Activated T-helper 1 cell treated with anti-CD3 and anti-CD28 coated beads, Interleukin-12 subunit alpha, Interleukin-12 subunit beta, Interleukin-2, Interleukin-4 antibody, amounts not matched to agents 30 ng/mL and 10 ng/mL and 1 ng/mL, durations not matched to agents 14 hours and 24 hours and 36 hours (primary cell): ENCODE measurements at regions of chr5 and their contacts with region 1.

Region 1: GRCh38 chr5:148963664-148964063 is 99.2 kb downstream of the SH3TC2 start:
- DNase-seq: no peak
- H3K4me3 Mint-ChIP-seq: no peak overlapping the region
- H3K27ac Mint-ChIP-seq: no peak overlapping the region
- H3K4me1 Mint-ChIP-seq: peaks cover 7% of the 10 kb centered on the region
- H3K27me3 Mint-ChIP-seq: peaks cover 2% of the 10 kb centered on the region

Region 2: DNA sequence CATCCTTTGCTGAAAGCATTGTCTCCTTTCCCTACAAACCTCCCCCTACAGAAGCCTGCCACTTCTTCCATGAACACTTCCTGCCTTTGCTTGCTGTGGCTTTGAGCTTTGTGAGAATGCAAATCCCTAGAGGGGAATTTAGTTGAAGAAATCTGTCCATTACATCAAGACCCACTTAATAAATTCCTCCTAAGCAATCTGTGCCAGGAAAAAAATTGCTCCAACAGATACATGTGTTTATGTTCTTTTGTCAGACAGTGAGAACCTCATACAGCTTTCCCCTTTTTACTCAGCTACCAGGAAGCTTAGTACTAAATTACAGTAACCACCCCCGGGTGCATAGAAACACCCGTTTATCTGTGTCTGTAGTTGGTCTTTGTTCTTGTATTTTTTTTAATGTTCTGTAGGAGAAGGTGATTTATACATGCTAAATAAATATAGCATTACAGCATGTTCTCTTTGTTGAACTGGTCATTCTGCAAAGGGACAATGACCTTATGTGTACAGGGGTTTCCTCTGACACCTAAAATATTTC is 55.3 kb after region 1 on chr5:
- intact Hi-C with region 1: no loop called
- DNase-seq: no peak
- H3K4me3 Mint-ChIP-seq: no peak overlapping the region
- H3K27ac Mint-ChIP-seq: peak overlapping the region; percentile 40
- H3K4me1 Mint-ChIP-seq: peaks cover 19% of the 10 kb centered on the region
- H3K27me3 Mint-ChIP-seq: peaks cover 6% of the 10 kb centered on the region

Region 3: DNA sequence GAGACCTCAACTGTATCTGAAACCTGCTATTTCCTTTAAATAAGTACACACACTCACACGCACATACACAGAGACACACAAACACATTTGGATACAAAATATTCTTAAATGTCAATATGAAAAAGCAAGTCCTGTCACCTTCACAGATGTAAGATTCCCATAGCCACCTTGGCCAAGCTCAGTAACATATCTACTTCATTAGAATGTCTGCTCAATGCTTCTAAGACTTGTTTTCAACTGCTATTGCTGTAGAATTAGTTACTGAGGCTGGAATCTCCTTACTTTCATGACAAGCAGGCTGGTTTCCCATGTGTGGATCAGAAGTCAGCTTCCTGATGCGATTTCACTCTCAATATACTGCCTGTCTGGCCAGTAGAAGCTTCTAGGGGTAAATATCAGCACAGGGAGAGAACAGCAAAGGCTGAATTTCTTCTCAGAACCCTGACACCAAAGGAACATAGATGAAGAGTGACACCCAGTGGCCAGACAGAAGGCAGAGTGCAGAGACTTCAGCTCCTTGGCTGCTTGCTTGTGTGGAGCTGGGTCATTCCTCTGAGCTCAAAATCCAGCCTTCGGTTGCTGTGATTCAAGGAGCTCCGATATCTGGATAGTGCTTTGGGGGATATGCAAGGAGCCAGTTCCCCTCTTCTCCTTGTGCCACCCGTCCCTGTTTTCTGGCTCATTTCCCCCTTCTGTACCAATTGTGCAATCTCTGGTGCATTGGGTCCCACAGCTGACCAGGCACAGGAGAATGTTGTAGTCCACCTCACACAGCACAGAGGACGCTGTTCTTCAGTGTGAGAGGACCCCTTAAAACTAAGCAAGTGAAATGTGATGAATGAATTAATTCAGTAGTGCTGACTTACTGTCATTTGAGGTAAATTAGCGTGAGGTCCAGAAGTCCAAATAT is 151.0 kb after region 1 on chr5:
- intact Hi-C with region 1: loop called (anchors 10 kb)
- DNase-seq: peak; percentile 3
- H3K4me3 Mint-ChIP-seq: no peak overlapping the region
- H3K27ac Mint-ChIP-seq: no peak overlapping the region
- H3K4me1 Mint-ChIP-seq: no peaks in the 10 kb centered on the region
- H3K27me3 Mint-ChIP-seq: peaks cover 29% of the 10 kb centered on the region